Naive thymus-derived CD4-positive, alpha-beta T cell (primary cell): ENCODE measurements at regions of chr12 and their contacts with region 1.

Region 1: DNA sequence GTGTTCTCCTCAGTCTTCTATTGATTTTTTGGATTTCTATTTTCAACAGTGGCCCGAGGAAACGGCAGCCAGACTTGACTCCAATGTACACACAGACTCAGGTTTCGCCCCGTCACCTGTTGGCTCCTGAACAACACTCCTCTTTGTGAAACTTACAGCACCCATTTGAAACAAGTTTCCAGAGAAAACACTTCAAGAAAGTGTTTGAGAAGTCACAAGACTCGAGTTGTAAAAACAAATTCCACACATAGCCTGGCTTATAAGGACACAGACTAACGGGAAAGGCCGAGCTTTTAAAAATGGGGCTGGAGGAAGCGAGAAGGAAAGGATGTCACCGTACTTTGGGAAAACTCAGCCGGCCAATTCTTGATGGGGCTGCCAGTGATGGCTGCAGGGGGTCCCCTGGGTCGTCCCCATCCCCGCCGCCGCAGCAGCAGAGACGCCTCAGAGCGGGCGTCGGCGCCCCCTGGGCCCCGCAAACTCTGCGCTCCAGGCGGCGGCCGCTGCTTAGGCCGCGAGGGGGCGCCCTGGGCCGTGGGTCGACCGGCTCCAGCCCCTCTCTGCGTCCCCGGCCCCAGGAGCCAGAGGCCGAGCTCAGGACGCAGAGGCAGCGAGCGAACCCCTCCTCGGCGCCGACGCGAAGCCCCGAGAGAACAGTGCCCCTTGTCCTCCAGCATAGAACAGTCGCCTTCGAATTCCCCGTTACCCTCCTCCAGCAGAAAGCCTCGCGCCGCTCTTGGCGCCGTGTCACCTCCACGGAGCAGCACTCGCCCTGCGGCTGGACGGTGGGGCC is 106.9 kb downstream of the PRICKLE1 start:
- DNase-seq: peak in 7 of 9 donors; percentile 10 to 74 (median 32)
- ATAC-seq: peak; percentile 80
- H3K4me3 ChIP-seq: peak overlapping the region; percentile 58
- H3K4me3 Mint-ChIP-seq: peak overlapping the region; percentile 67 to 90 (median 80)
- H3K27ac ChIP-seq: no peak overlapping the region
- H3K27ac Mint-ChIP-seq: no peak overlapping the region
- H3K4me1 ChIP-seq: peaks cover 0 to 5% of the 10 kb centered on the region in 2 donors
- H3K4me1 Mint-ChIP-seq: peaks cover 4 to 16% (median 10%) of the 10 kb centered on the region in 7 donors
- H3K27me3 ChIP-seq: peaks cover 0 to 24% of the 10 kb centered on the region in 2 donors
- H3K27me3 Mint-ChIP-seq: peaks cover 69 to 89% (median 82%) of the 10 kb centered on the region in 5 donors

Region 2: GRCh38 chr12:42568952-42569915 is 86.6 kb after region 1 on chr12:
- CTCF ChIA-PET with region 1: no interaction called
- POLR2A ChIA-PET with region 1: no interaction called
- intact Hi-C with region 1: loop called in 1 of 2 experiments (anchors 1 kb)
- DNase-seq: peak in 1 of 9 donors; percentile 16
- ATAC-seq: no peak
- H3K4me3 ChIP-seq: no peak overlapping the region
- H3K4me3 Mint-ChIP-seq: no peak overlapping the region
- H3K27ac ChIP-seq: no peak overlapping the region
- H3K27ac Mint-ChIP-seq: no peak overlapping the region
- H3K4me1 ChIP-seq: no peaks in the 10 kb centered on the region
- H3K4me1 Mint-ChIP-seq: no peaks in the 10 kb centered on the region
- H3K27me3 ChIP-seq: no peaks in the 10 kb centered on the region
- H3K27me3 Mint-ChIP-seq: peaks cover 0 to 17% (median 8%) of the 10 kb centered on the region in 5 donors

Region 3: DNA sequence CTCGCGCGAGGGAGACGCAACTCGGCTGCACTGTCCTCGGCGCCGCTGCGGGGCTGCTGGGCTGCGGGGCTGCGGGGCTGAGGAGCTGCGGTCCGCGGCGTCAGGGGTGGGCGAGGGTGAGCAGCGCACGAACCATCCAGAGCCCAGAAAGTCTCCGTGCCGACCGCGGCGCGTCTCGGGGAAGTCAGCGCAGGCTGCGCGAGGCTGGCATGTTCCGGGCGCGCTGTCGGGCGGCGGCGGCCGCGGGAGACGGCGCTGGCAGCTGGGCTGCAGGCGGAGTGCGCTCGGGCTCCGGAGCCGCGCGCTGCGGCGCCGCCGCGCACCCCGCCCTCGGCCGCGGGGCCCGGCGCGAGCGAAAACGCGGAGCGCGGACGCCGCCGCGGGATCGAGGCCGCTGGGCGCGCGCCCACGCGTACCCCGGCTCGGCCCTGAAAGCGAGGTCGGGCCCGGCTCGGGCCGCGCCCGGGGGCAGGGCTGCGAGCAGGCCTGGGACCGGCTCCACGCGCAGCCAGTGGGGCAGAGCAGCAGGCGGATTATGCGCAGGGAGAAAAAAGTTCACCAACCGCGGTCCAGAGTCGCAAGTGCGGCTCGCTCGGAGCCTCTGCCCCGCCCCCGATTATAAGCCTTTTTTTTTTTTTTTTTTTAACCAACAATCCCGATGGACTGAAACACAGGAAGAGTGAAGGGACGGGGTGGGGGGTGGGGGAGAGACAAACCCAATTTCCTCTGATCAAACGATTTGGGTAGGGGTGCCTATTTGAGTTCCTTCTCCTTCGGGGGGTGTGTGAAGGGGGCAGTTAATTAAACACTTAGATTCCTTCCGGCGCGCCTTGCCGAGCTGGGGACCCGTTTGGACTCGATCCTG is 107.1 kb after region 1 on chr12 and contains the start of gene PRICKLE1:
- CTCF ChIA-PET with region 1: no interaction called
- POLR2A ChIA-PET with region 1: no interaction called
- intact Hi-C with region 1: no loop called
- DNase-seq: peak in 2 of 9 donors; percentile 13 to 70
- ATAC-seq: peak; percentile 67
- H3K4me3 ChIP-seq: peak within 1 kb of the TSS; percentile 20
- H3K4me3 Mint-ChIP-seq: peak within 1 kb of the TSS; percentile 65 to 81 (median 76)
- H3K27ac ChIP-seq: no peak within 1 kb of the TSS
- H3K27ac Mint-ChIP-seq: no peak within 1 kb of the TSS
- H3K4me1 ChIP-seq: peaks cover 0 to 4% of the 10 kb centered on the region in 2 donors
- H3K4me1 Mint-ChIP-seq: peaks cover 0 to 21% (median 16%) of the 10 kb centered on the region in 7 donors
- H3K27me3 ChIP-seq: peaks cover 0 to 4% of the 10 kb centered on the region in 2 donors
- H3K27me3 Mint-ChIP-seq: peaks cover 55 to 68% (median 62%) of the 10 kb centered on the region in 5 donors
- total RNA-seq, gene PRICKLE1: 0.10 to 1.2 (median 0.34) TPM in 3 of 5 experiments, not detected in the others

Region 4: GRCh38 chr12:42756841-42757661 is 274.4 kb after region 1 on chr12:
- CTCF ChIA-PET with region 1: no interaction called
- POLR2A ChIA-PET with region 1: no interaction called
- intact Hi-C with region 1: no loop called
- DNase-seq: no peak
- ATAC-seq: no peak
- H3K4me3 ChIP-seq: no peak overlapping the region
- H3K4me3 Mint-ChIP-seq: no peak overlapping the region
- H3K27ac ChIP-seq: no peak overlapping the region
- H3K27ac Mint-ChIP-seq: no peak overlapping the region
- H3K4me1 ChIP-seq: no peaks in the 10 kb centered on the region
- H3K4me1 Mint-ChIP-seq: peaks cover 0 to 3% (median 0%) of the 10 kb centered on the region in 7 donors
- H3K27me3 ChIP-seq: no peaks in the 10 kb centered on the region
- H3K27me3 Mint-ChIP-seq: no peaks in the 10 kb centered on the region

Region 5: GRCh38 chr12:43336962-43337555 is 854.4 kb after region 1 on chr12:
- CTCF ChIA-PET with region 1: no interaction called
- POLR2A ChIA-PET with region 1: no interaction called
- intact Hi-C with region 1: loop called in 1 of 2 experiments (anchors 2 kb)
- DNase-seq: no peak
- ATAC-seq: no peak
- H3K4me3 ChIP-seq: no peak overlapping the region
- H3K4me3 Mint-ChIP-seq: no peak overlapping the region
- H3K27ac ChIP-seq: no peak overlapping the region
- H3K27ac Mint-ChIP-seq: no peak overlapping the region
- H3K4me1 ChIP-seq: no peaks in the 10 kb centered on the region
- H3K4me1 Mint-ChIP-seq: no peaks in the 10 kb centered on the region
- H3K27me3 ChIP-seq: no peaks in the 10 kb centered on the region
- H3K27me3 Mint-ChIP-seq: peaks cover 0 to 13% (median 7%) of the 10 kb centered on the region in 5 donors